ENCODE measurements at regions of chr2 and their contacts with region 1.

Region 1: GRCh38 chr2:218622606-218623365 is 15.1 kb downstream of the PLCD4 start:
- DNase-seq: no peak
- H3K4me3 ChIP-seq: no peak overlapping the region
- CTCF ChIP-seq: no peak
- POLR2A ChIP-seq: no peak

Region 2: GRCh38 chr2:216807857-216808272 is 1814.9 kb before region 1 on chr2:
- intact Hi-C with region 1: loop called (anchors 10 kb)
- DNase-seq: no peak
- H3K4me3 ChIP-seq: no peak overlapping the region
- CTCF ChIP-seq: no peak
- POLR2A ChIP-seq: no peak

Region 3: GRCh38 chr2:219028996-219029828 is 406.4 kb after region 1 on chr2:
- intact Hi-C with region 1: no loop called
- DNase-seq: no peak
- H3K4me3 ChIP-seq: no peak overlapping the region
- CTCF ChIP-seq: no peak
- POLR2A ChIP-seq: no peak

Region 4: DNA sequence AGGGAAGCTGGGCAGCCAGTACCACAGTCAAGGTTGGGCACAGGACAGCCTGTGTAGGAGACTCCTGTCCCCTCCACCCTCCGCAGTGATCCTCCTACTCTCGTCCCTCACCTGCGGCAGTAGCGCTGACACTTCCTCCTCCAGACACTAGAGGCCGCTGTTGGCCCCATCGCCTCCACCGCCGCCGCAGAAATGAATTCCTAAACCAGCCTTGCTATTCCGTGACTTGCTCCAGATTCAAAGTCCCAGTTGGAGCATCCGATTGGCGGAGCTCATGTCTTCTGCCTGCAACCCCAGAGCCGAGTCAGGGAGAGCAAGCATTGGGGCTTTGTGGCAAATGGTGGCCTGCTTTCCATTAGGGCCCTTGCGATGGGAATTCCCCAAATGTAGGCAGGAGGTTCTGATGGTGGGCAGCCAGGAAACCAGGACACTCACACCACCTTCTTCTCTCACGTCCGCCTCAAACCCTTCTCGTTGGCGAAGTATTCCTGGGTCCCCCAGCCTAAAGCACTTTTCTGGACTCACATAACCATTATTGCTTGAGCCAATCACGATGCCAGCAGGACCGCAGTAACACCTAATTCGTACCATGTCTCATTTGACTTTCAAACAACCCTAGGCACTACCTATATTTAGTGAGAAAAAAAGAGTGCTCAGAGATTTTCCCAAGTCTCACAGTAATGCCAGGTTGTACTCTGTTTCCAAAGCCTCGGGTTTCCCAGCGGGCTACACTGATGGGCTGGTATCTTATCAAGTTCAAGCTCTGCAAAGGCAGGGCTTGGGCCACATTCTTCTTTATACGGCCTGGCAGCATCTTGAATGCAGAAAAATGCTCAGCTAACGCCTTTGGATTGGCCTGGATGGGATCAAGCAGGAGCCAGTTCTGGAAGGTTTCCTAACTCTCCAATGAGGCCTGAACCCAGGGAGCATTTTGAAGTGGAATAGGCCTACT is 655.2 kb after region 1 on chr2:
- intact Hi-C with region 1: no loop called
- DNase-seq: peak; percentile 82 to 97
- H3K4me3 ChIP-seq: no peak overlapping the region
- CTCF ChIP-seq: peak in 2 of 3 donors; percentile 3 to 94
- POLR2A ChIP-seq: no peak

Measured in lower leg skin (tissue), 4 donors.